Right cardiac atrium (tissue), 5 donors: ENCODE measurements at regions of chr15 and their contacts with region 1.

Region 1: DNA sequence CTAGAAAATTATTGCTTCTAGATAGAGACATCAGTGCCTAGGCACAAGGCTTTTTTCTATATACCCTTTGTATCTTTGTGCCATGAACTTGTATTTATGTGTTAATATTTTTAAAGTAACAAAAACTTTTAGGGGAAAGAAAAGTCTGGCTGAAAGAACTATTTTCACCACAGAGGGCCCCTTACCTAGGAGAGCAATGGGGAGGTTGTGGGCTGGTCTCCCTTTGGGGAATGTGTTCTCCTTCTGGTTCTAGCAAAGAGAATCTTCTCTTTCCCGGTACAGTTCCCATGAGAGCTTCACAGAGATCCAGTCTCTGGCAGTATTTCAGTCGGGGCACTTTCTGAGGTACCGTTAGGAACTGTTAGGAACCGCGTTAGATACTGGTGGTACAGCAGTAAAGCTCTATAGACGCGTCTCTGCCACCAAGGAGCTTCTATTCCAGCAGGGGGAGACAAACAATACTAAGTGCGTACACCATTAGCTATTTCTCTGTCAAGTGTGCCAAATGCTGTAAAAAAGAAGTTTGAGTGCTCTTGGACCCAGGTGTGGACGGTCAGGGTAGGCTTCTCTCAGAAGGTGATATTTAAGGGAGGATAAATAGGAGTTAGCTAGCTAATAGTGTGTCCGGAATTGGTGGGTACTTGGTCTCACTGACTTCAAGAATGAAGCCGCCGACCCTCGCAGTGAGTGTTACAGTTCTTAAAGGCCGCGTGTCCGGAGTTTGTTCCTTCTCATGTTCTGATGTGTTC is 4.6 kb upstream of the EPB42 start:
- DNase-seq: no peak
- ATAC-seq: peak; percentile 84 to 85
- H3K4me3 ChIP-seq: no peak overlapping the region
- H3K27ac ChIP-seq: no peak overlapping the region
- H3K4me1 ChIP-seq: no peaks in the 10 kb centered on the region
- H3K27me3 ChIP-seq: no peaks in the 10 kb centered on the region

Region 2: DNA sequence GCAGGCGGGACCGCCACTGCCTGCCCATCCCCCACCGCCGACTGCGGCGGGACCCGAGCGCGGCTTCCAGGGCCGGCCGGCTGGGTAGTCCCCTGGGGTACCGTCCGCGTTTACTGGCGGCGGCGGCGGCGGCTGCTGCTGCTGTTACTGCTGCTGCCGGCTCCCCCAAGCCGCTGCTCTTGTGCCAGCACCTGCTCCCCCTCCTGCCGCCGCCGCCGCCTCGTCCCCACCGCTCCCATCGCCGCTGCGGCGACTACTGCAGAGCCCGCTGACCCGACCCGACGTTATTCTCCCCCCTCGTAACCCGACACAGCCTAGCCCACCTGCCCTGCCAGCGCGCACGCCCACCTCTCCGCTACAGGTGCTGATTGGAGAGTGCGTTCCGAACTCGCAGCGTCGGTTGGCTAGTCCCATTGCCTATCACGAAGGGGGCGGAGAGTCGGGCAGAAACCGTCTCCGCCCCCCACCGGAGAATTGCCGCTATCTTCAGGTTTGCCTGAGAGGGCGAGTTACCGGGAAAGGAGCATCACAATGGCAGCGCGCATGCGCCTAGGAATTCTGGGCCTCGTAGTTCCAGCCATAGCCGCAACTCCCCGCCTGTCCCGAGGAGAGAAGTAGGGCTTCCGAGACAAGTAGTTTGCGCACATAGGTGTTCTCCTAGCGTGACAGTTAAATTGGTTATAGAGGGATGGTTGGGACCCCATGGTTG is 304.7 kb before region 1 on chr15 and contains the start of gene TTBK2:
- intact Hi-C with region 1: no loop called
- DNase-seq: peak; percentile 98 to 99 (median 99)
- ATAC-seq: peak; percentile 99 to 100
- H3K4me3 ChIP-seq: peak within 1 kb of the TSS; percentile 92
- H3K27ac ChIP-seq: peak within 1 kb of the TSS; percentile 87
- H3K4me1 ChIP-seq: no peaks in the 10 kb centered on the region
- H3K27me3 ChIP-seq: no peaks in the 10 kb centered on the region
- total RNA-seq, gene TTBK2: 26.7 to 38.6 (median 31.7) TPM

Region 3: GRCh38 chr15:43067717-43068461 is 157.5 kb before region 1 on chr15:
- intact Hi-C with region 1: no loop called
- DNase-seq: no peak
- ATAC-seq: no peak
- H3K4me3 ChIP-seq: no peak overlapping the region
- H3K27ac ChIP-seq: no peak overlapping the region
- H3K4me1 ChIP-seq: no peaks in the 10 kb centered on the region
- H3K27me3 ChIP-seq: no peaks in the 10 kb centered on the region

Region 4: DNA sequence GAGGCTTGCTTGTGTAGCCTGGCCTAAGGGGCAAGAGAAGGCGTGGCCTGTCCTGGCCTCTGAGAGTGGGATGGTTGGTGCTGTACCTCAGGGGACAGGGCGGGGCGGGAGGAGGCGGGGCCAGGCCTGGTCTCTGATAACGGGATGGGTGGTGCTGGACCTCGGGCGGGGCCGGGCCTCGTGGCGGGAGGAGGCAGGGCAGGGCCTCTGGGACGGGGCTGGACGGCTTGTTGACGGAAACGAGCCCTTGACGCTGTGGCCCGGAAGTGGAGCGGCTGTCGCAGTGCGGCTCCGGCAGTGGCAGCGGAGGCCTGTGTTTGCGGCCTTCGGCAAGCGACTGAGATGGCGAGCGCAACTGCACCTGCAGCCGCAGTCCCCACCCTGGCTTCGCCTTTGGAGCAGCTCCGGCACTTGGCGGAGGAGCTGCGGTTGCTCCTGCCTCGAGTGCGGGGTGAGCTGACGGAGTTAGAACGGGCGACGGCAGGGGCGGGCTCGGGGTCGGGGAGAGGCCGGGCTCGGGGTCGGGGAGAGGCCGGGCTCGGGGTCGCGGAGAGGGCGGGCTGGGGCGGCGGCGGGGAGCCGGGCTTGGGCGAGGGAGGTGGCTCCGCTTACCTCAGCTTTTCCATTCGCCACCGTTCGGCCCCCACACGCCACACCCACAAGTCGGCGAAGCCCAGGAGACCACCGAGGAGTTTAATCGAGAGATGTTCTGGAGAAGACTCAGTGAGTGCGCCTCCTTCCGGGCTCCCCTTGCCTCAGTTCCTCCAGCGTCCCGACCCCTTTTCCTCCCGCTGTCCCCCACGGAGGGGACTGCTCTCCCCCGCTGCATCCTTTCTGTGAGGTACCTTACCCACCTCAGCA is 40.0 kb before region 1 on chr15 and contains the start of gene CCNDBP1:
- intact Hi-C with region 1: no loop called
- DNase-seq: peak; percentile 98 to 99 (median 99)
- ATAC-seq: peak; percentile 99
- H3K4me3 ChIP-seq: peak within 1 kb of the TSS; percentile 86
- H3K27ac ChIP-seq: peak within 1 kb of the TSS; percentile 88
- H3K4me1 ChIP-seq: peaks cover 3% of the 10 kb centered on the region
- H3K27me3 ChIP-seq: no peaks in the 10 kb centered on the region
- total RNA-seq, gene CCNDBP1: 41.4 to 55.6 (median 53.7) TPM

Region 5: GRCh38 chr15:43253431-43254403 is 28.3 kb after region 1 on chr15:
- intact Hi-C with region 1: no loop called
- DNase-seq: peak in 1 of 3 donors; percentile 76
- ATAC-seq: peak; percentile 38
- H3K4me3 ChIP-seq: no peak overlapping the region
- H3K27ac ChIP-seq: no peak overlapping the region
- H3K4me1 ChIP-seq: no peaks in the 10 kb centered on the region
- H3K27me3 ChIP-seq: no peaks in the 10 kb centered on the region

Region 6: GRCh38 chr15:43285609-43286037 is 60.2 kb after region 1 on chr15:
- intact Hi-C with region 1: loop called (anchors 2 to 5 kb)
- DNase-seq: no peak
- ATAC-seq: peak; percentile 60 to 74
- H3K4me3 ChIP-seq: no peak overlapping the region
- H3K27ac ChIP-seq: no peak overlapping the region
- H3K4me1 ChIP-seq: no peaks in the 10 kb centered on the region
- H3K27me3 ChIP-seq: no peaks in the 10 kb centered on the region